ENCODE measurements at regions of chr6 and their contacts with region 1.

Region 1: DNA sequence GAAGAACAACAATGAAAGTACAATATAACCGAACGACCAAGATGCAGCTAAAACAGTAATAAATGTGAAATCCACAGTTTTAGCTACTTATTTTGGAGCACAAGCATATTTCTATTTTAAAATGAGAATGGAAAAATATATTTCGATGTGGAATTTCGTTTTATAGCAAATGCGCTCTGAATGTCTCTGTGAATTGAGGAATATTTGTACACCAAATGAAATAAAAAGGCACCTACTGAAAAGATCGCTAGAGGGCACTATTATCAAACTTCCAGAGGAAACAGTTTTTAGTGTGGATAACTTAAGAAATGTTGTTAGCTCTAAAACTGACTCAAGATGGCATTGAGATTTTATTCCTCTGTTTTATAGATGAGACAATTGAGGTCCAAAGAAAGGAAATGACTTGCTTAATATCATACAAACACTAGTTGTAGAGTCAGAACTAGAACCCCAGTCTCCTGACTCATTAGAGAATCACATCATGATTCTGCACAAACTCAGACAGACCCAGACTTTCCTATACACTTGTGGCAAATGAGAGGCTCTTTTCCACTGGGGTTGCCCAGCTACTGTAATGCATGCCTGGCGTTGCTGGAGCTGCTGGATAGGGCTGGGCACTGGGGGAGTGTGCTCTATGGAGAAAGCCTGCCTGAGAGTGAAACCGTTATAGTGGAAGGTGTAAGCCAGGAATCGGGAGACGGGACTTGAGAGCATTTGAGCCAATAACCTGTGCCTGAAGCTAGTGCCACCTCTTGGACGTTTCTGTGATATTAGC is 51.9 kb downstream of the GCLC start:
- DNase-seq: peak; percentile 65
- H3K4me3 ChIP-seq: peak overlapping the region; percentile 20 to 36 (median 21)
- H3K27ac ChIP-seq: peak overlapping the region; percentile 16
- H3K4me1 ChIP-seq: peaks cover 22% of the 10 kb centered on the region
- H3K27me3 ChIP-seq: no peaks in the 10 kb centered on the region
- CTCF ChIP-seq: peak; percentile 71 to 72

Region 2: DNA sequence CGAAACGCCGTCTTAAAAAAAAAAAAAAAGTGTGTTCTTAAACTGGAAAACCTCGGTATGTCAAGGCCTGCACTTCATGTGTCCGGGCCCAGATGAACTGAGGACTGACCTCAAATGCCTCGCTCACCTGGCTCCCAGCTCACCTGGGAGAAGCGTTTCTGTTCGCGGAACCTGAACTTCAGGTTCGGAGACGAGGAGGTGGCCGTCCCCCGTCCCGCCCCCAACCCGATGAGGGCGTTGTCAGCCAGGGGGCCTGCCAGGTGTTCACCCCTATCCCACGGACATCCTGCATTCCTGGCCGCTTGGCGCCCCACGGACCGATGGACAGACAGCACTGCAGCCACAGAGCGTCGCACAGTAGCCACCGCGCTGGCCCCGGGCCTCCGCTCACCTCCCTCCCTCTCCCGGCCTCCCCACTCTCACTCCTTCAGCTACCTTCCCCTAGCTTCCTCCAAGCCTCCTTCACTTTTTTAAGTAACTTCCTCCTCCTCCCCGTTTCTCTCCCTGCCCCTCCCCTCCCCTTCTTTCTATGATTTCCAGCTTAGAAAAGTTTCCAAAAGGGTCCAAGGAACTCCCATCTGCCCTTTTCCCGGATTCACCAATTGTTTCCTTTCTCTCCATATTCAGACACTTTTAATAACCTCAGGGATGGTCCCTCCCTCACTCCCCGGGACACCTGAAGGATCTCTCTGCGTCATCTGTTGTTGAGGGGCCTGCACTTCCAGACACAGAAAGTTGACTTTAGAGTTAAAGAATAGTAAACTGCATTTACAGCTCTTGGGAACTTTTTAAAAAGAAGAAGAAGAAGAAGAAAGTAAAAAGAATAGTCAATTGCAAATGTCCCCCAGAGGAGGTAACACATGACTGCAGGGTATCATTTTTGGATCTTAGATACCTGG is 1185.8 kb before region 1 on chr6:
- CTCF ChIA-PET with region 1: interaction called, 16 read pairs
- dilution Hi-C with region 1: no loop called
- in situ Hi-C with region 1: no loop called
- intact Hi-C with region 1: no loop called
- DNase-seq: no peak
- H3K4me3 ChIP-seq: no peak overlapping the region
- H3K27ac ChIP-seq: no peak overlapping the region
- H3K4me1 ChIP-seq: no peaks in the 10 kb centered on the region
- H3K27me3 ChIP-seq: no peaks in the 10 kb centered on the region
- CTCF ChIP-seq: no peak

Region 3: GRCh38 chr6:52937908-52938307 is 555.1 kb before region 1 on chr6:
- CTCF ChIA-PET with region 1: no interaction called
- dilution Hi-C with region 1: no loop called
- in situ Hi-C with region 1: no loop called
- intact Hi-C with region 1: no loop called
- DNase-seq: peak; percentile 64
- H3K4me3 ChIP-seq: no peak overlapping the region
- H3K27ac ChIP-seq: no peak overlapping the region
- H3K4me1 ChIP-seq: peaks cover 8% of the 10 kb centered on the region
- H3K27me3 ChIP-seq: no peaks in the 10 kb centered on the region
- CTCF ChIP-seq: no peak

Region 4: DNA sequence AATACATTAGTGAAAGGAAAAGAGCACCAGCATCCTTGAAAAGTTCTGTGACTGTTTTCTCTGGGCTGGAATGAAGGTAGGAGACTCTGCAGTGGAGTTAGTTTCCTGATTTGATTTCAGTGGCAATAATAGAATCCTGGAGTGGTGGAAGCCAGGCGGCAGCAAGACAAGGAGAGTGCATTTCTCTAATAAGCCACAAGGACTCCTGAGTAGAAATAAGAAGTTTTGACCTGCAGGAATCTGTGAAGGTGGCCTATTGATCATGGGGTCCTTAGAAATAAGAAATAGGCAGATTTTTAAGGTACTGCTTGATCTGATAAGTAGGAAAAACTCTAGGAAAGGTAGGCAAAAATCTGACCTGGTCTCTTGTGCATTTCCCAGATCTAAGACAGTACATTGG is 75.9 kb before region 1 on chr6:
- CTCF ChIA-PET with region 1: no interaction called
- dilution Hi-C with region 1: no loop called
- in situ Hi-C with region 1: no loop called
- intact Hi-C with region 1: no loop called
- DNase-seq: no peak
- H3K4me3 ChIP-seq: no peak overlapping the region
- H3K27ac ChIP-seq: no peak overlapping the region
- H3K4me1 ChIP-seq: no peaks in the 10 kb centered on the region
- H3K27me3 ChIP-seq: no peaks in the 10 kb centered on the region
- CTCF ChIP-seq: no peak

Region 5: DNA sequence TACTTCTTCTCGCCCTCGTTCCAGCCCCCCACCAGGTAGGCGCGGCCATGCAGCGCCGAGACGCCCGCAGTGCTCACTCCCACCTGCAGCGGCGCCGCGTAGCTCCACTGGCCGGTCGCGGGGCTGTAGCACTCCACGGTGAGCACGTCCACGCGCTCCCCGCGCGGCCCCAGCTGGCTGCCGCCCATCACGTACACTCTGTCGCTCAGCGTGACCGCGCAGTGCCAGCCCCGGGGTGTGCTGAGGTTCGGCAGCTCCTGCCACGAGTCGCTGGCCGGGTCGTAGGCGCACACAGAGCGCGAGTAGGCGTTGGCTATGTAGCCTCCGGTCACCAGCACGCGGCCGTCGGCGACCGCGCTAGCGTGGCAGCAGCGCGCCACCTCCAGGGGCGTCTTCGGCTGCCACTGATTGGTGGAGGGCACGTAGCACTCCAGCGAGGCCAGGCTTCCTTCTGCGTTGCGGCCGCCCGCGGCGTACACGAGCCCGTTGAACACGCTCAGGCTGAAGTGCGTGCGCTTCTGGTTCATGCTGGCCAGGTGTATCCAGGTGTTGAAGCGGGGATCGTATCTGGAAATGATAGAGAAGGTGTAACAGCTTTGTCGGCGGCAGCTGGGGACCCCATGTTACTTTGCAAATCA is 158.8 kb after region 1 on chr6:
- CTCF ChIA-PET with region 1: interaction called, 5 read pairs
- dilution Hi-C with region 1: no loop called
- in situ Hi-C with region 1: no loop called
- intact Hi-C with region 1: loop called (anchors 1 kb)
- DNase-seq: peak; percentile 85
- H3K4me3 ChIP-seq: peak overlapping the region; percentile 45 to 68 (median 65)
- H3K27ac ChIP-seq: peak overlapping the region; percentile 83
- H3K4me1 ChIP-seq: peaks cover 26% of the 10 kb centered on the region
- H3K27me3 ChIP-seq: no peaks in the 10 kb centered on the region
- CTCF ChIP-seq: peak in 1 of 2 donors; percentile 42

Region 6: GRCh38 chr6:53725791-53726431 is 232.9 kb after region 1 on chr6:
- CTCF ChIA-PET with region 1: interaction called, 4 read pairs
- dilution Hi-C with region 1: no loop called
- in situ Hi-C with region 1: loop called (anchors 10 kb)
- intact Hi-C with region 1: loop called (anchors 1 kb)
- DNase-seq: peak; percentile 48
- H3K4me3 ChIP-seq: no peak overlapping the region
- H3K27ac ChIP-seq: no peak overlapping the region
- H3K4me1 ChIP-seq: peaks cover 3% of the 10 kb centered on the region
- H3K27me3 ChIP-seq: no peaks in the 10 kb centered on the region
- CTCF ChIP-seq: peak; percentile 98 to 99

Region 7: DNA sequence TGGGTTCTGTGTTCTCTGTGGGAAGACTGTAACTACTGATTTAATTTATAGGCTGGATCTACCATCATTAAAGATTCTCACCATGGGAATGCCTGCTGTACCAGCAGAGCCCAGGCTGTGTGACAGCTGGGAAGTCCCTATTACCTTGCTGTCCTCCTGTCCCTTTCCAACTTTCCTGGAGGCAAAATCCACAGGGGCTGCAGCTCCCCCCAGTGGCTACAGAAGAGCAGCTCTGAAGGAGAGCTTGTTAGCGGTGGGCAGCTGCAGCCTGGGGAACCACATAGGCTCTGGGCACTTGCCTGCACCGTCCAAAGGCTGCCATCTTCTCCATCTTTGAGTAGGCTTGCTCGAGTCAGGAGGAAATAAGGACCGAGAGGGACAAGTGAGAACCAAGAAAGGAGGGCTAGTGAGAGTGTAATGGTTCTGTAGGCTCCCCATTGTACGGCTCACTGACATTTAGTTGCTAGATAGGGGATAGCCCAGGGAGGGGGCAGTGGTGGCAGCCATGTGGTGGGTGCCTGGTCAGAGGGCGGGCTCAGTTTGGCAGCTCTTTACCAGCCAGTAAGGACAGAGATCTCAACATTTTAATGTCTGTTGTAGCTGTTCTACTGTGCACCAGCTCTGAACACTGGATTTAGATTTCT is 463.1 kb after region 1 on chr6:
- CTCF ChIA-PET with region 1: interaction called, 6 read pairs
- dilution Hi-C with region 1: no loop called
- in situ Hi-C with region 1: loop called in 1 of 2 experiments (anchors 25 kb)
- intact Hi-C with region 1: loop called (anchors 1 kb)
- DNase-seq: peak; percentile 54
- H3K4me3 ChIP-seq: no peak overlapping the region
- H3K27ac ChIP-seq: no peak overlapping the region
- H3K4me1 ChIP-seq: no peaks in the 10 kb centered on the region
- H3K27me3 ChIP-seq: no peaks in the 10 kb centered on the region
- CTCF ChIP-seq: peak; percentile 54 to 82

Measured in mammary epithelial cell (primary cell).